ENCODE measurements at regions of chr16 and their contacts with region 1.

Region 1: DNA sequence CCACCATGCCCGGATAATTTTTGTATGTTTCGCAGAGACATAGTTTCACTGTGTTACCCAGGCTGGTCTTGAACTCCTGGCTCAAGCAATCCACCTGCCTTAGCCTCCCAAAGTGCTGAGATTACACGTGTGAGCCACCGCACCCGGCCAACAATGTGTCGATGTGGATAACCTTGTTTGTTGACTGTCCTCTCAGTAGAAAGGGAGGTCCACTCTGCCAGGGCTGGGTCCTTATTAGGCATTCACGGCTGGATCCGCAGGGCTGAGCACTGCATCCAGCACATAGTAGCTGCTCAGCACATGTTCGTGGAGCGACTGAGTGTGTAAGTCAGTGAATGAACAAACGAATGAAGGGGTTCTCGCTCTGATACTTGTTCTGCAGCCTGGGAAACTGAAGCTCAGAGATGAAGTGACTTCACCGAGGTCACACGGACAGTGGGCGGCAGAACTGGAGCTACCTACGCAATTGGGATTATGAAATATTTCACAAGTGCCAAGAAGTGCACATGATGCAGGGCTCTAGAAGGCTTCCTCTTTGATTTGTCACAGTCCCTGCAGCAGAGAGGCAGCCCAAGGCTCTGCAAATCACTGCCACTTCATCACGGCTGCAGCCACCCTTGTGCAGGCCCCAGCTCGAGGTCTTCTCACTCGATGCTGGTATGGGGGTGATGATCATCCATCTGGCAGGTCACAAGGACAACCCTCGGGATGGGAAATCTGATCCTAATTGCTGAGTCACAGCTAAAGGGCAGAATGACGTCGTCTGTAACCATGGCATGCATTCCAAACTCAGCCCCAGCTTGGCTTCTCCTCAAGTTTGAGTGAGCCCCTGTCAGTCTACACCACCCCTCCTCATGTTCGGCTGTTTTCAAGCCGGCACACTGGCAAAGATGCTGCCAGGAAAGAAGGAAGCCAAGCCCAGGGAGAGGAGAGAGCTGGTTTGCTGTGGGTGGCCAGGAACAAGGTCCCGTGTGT is 28.0 kb upstream of the SNN start:
- DNase-seq: no peak
- H3K4me3 ChIP-seq: no peak overlapping the region
- H3K27ac ChIP-seq: peak overlapping the region; percentile 15; the same call in 1 of the 2 replicates
- H3K4me1 ChIP-seq: peaks cover 0 to 25% (median 19%) of the 10 kb centered on the region in 4 experiments; a peak in 6 of 7 replicates
- H3K27me3 ChIP-seq: no peaks in the 10 kb centered on the region
- CTCF ChIP-seq: peak in 1 of 3 experiments; percentile 2; a peak in 1 of 4 replicates
- EP300 ChIP-seq: no peak
- POLR2A ChIP-seq: no peak; a peak in 1 of 3 replicates
- RAD21 ChIP-seq: no peak

Region 2: GRCh38 chr16:11407047-11407982 is 232.9 kb before region 1 on chr16:
- CTCF ChIA-PET with region 1: interaction called, 30 read pairs
- POLR2A ChIA-PET with region 1: interaction called, 4 read pairs
- DNase-seq: peak in 1 of 2 experiments; percentile 88
- H3K4me3 ChIP-seq: no peak overlapping the region
- H3K27ac ChIP-seq: no peak overlapping the region
- H3K4me1 ChIP-seq: no peaks in the 10 kb centered on the region; a peak in 2 of 7 replicates
- H3K27me3 ChIP-seq: no peaks in the 10 kb centered on the region
- CTCF ChIP-seq: peak; percentile 39 to 83 (median 73)
- EP300 ChIP-seq: no peak
- POLR2A ChIP-seq: no peak
- RAD21 ChIP-seq: peak; percentile 80 to 86

Region 3: DNA sequence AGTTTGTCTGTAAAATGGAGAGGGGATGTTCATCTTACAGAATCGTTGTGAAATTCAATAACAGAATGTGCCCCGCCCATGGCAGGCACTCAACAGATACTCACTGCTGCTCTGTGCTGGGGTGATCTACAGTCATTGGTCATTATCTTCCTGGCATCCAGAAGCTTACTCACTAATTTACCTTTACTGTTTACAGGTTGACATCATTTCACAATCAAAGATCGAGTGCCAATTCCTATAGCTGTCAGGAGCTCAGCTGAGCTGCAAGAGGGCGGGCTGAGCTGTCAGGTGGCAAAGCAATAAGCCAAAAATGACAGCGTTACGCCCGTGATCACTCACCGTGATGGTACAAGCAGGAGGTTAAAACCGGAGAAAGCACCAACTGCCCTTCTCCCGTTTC is 104.7 kb before region 1 on chr16:
- CTCF ChIA-PET with region 1: interaction called, 51 read pairs
- POLR2A ChIA-PET with region 1: interaction called, 6 read pairs
- DNase-seq: no peak
- H3K4me3 ChIP-seq: no peak overlapping the region
- H3K27ac ChIP-seq: no peak overlapping the region
- H3K4me1 ChIP-seq: peaks cover 0 to 3% (median 0%) of the 10 kb centered on the region in 4 experiments; a peak in 4 of 7 replicates
- H3K27me3 ChIP-seq: no peaks in the 10 kb centered on the region
- CTCF ChIP-seq: no peak
- EP300 ChIP-seq: no peak
- POLR2A ChIP-seq: no peak
- RAD21 ChIP-seq: no peak

Region 4: GRCh38 chr16:11604783-11605558 is 35.2 kb before region 1 on chr16:
- CTCF ChIA-PET with region 1: interaction called, 15 read pairs
- POLR2A ChIA-PET with region 1: interaction called, 4 read pairs
- DNase-seq: no peak
- H3K4me3 ChIP-seq: no peak overlapping the region
- H3K27ac ChIP-seq: no peak overlapping the region
- H3K4me1 ChIP-seq: peaks cover 3 to 8% (median 4%) of the 10 kb centered on the region in 4 experiments; a peak in 6 of 7 replicates
- H3K27me3 ChIP-seq: no peaks in the 10 kb centered on the region
- CTCF ChIP-seq: no peak
- EP300 ChIP-seq: no peak
- POLR2A ChIP-seq: no peak
- RAD21 ChIP-seq: no peak

Region 5: DNA sequence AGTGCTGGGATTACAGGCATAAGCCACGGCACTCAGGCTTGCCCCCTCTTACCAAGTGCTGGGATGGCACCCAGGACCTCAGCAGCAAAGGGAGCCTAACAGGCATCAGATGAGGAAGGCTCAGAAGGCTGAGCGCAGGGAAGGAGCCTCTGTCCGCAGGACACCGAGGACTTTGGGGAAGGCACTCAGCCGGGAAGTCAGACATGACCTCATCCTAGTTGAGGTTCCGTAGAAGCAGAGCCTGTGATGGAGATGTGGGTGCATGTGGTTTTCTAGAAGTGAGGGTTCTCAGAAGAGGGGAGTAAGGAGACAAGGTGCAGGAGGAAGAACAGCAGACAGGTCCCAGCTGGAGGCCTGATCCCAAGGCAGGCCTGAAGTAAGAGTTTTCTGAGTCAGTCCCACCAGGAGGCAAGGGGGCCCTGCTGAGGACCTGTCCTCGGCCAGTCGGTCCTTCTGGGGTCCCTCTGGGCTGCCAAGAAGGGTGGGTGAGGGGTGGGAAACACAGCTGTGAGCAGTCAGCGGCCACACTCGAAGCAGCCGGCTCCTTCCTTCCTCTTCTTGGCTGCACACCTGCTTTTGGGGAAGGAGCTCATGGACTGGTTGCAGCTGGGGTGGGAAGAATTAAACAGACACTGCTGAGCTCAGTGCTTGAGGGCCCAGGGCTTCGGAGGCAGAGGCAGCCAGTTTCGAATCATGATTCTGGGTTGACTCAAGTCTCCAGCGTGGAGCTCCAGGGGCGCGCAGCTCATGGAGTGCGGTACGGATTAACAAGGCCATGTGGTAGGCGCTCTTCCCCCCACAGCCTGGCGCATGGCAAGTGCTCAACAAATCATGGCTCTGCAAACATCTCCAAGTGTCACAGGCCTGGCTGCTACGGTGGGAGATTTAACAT is 10.9 kb before region 1 on chr16:
- CTCF ChIA-PET with region 1: interaction called, 11 read pairs
- POLR2A ChIA-PET with region 1: interaction called, 23 read pairs
- DNase-seq: no peak
- H3K4me3 ChIP-seq: no peak overlapping the region
- H3K27ac ChIP-seq: no peak overlapping the region
- H3K4me1 ChIP-seq: peaks cover 0 to 5% (median 0%) of the 10 kb centered on the region in 4 experiments; a peak in 1 of 7 replicates
- H3K27me3 ChIP-seq: no peaks in the 10 kb centered on the region
- CTCF ChIP-seq: no peak
- EP300 ChIP-seq: no peak
- POLR2A ChIP-seq: no peak
- RAD21 ChIP-seq: no peak

Region 6: DNA sequence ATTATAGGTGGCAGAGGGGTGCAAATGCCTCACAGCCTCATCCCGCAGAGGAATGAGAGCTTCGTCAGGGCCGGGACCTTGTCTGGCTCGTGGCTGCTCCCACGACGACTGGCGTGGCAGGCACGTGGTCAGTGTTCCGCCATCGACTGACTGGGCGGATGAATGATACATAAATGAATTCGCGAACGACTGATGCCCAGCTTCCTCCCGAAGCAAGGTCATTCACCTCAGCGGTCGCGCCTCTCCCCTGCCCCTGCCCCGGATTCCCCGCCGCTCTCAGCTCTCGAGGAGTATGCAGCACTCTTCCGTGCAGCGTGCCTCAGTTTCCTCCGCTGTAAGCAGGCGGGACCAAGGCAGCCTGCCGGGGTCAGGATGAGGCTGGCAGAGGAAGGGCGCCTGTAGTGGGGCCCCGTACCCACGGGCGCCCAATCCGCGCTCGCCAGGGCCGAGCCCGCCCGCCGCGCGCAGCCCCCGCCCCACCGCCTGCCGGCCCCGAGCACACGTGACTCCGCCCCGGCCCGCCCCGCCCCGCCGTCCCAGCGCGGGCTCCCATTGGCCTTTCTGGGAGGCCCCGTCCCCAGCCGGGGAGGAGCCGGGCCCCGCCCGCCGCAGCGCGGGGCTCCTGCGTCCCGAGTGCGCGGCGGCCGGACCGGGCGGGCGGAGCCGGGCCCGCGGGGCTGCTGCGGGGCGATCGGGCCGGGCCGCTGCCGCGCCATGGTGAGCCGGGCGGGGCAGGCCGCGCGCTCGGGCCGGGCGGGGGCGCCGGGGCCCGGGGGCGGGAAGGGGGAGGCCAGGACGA is 27.8 kb after region 1 on chr16 and contains the start of gene SNN:
- CTCF ChIA-PET with region 1: interaction called, 13 read pairs
- POLR2A ChIA-PET with region 1: interaction called, 8 read pairs
- DNase-seq: peak in 1 of 2 experiments; percentile 86
- H3K4me3 ChIP-seq: peak within 1 kb of the TSS; percentile 67 to 78 (median 71)
- H3K27ac ChIP-seq: no peak within 1 kb of the TSS
- H3K4me1 ChIP-seq: peaks cover 5 to 38% (median 28%) of the 10 kb centered on the region in 4 experiments
- H3K27me3 ChIP-seq: peaks cover 0 to 4% (median 0%) of the 10 kb centered on the region in 4 experiments; a peak in 1 of 7 replicates
- CTCF ChIP-seq: no peak
- EP300 ChIP-seq: no peak
- POLR2A ChIP-seq: peak in 1 of 2 experiments; percentile 53; a peak in 1 of 3 replicates
- RAD21 ChIP-seq: no peak
- total RNA-seq, gene SNN: 60.6 and 66.9 TPM in 2 replicates